Activated CD8-positive, alpha-beta memory T cell treated with anti-CD3 and anti-CD28 coated beads, Interleukin-2, amount 10 ng/mL, durations not matched to agents 7 days and 5 days (primary cell): ENCODE measurements at regions of chr15 and their contacts with region 1.

Region 1: GRCh38 chr15:44711356-44712107 is at the start of gene B2M:
- DNase-seq: peak; percentile 96
- ATAC-seq: peak; percentile 76
- H3K4me3 Mint-ChIP-seq: peak within 1 kb of the TSS; percentile 95
- H3K27ac Mint-ChIP-seq: peak within 1 kb of the TSS; percentile 100
- H3K4me1 Mint-ChIP-seq: peaks cover 42% of the 10 kb centered on the region
- H3K27me3 Mint-ChIP-seq: no peaks in the 10 kb centered on the region
- total RNA-seq, gene B2M: 6,920 to 7,161 TPM

Region 2: GRCh38 chr15:44620081-44620480 is 91.5 kb before region 1 on chr15:
- CTCF ChIA-PET with region 1: no interaction called
- DNase-seq: no peak
- ATAC-seq: no peak
- H3K4me3 Mint-ChIP-seq: no peak overlapping the region
- H3K27ac Mint-ChIP-seq: no peak overlapping the region
- H3K4me1 Mint-ChIP-seq: peaks cover 5% of the 10 kb centered on the region
- H3K27me3 Mint-ChIP-seq: no peaks in the 10 kb centered on the region

Region 3: GRCh38 chr15:44676676-44677075 is 34.9 kb before region 1 on chr15:
- CTCF ChIA-PET with region 1: interaction called, 24 read pairs
- DNase-seq: peak; percentile 77
- ATAC-seq: peak; percentile 54
- H3K4me3 Mint-ChIP-seq: peak overlapping the region; percentile 60
- H3K27ac Mint-ChIP-seq: peak overlapping the region; percentile 92
- H3K4me1 Mint-ChIP-seq: peaks cover 76% of the 10 kb centered on the region
- H3K27me3 Mint-ChIP-seq: no peaks in the 10 kb centered on the region

Region 4: DNA sequence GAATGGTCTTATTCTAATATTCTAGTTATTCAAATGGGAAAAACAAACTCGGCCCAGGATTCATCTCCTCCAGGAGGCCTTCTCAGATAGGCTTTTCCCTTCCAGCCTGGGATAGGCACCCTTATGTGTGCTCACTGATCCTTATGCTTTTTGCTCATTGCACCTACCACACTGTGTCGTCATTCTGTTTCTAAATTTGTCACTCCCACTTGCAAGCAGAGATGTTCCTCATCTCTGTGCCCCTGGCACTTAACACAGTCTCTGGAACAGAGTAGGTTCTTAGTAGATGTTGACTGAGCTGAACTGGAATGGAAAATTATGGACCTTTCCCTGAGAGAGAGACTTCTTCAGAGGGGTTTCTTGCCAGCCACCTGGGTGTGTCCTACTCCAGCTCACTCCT is 29.3 kb before region 1 on chr15:
- CTCF ChIA-PET with region 1: interaction called, 24 read pairs
- DNase-seq: no peak
- ATAC-seq: no peak
- H3K4me3 Mint-ChIP-seq: peak overlapping the region; percentile 60
- H3K27ac Mint-ChIP-seq: peak overlapping the region; percentile 87
- H3K4me1 Mint-ChIP-seq: peaks cover 83% of the 10 kb centered on the region
- H3K27me3 Mint-ChIP-seq: no peaks in the 10 kb centered on the region

Region 5: DNA sequence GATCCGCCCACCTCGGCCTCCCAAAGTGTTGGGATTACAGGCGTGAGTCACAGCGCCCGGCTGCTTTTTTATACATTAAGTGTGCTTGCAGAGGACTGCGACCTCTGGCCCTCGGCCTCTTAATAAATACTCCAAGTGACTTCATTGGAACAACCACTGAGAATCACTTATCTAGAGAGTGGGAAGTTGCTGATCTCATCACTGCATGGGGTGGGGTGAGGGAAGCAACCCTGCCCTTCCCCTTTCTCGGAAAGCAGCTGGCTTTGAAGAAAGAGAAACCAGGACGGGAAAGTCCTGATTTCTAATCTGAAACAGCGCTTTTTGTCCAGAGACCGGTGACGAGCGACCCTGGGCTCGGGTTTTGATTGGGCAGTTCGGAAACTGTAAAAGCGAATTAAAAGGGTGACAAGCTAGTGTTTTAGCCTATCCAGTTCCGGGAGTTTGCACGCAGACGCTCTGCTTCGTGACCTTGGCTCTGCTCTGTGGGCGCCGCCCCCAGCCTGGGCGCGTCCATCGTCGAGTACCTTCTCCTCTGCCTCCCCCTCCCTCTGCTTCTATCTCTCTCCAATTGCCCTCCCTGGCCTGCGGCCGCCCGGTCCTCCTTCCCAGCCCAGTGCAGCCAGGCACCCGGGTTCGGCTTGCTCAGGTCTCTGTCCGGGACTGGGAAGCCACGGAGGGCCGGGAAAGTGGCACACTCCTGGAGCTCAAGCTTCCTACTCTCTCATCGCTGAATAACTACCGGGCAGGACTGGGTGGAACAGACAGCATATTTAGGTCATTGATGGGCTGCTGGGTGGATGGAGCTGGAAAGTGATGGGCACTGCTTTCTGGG is 17.3 kb after region 1 on chr15:
- CTCF ChIA-PET with region 1: interaction called, 138 read pairs
- DNase-seq: peak; percentile 98
- ATAC-seq: peak; percentile 80
- H3K4me3 Mint-ChIP-seq: peak overlapping the region; percentile 94
- H3K27ac Mint-ChIP-seq: peak overlapping the region; percentile 99
- H3K4me1 Mint-ChIP-seq: peaks cover 67% of the 10 kb centered on the region
- H3K27me3 Mint-ChIP-seq: no peaks in the 10 kb centered on the region

Region 6: GRCh38 chr15:44812029-44812517 is 100.5 kb after region 1 on chr15:
- CTCF ChIA-PET with region 1: no interaction called
- DNase-seq: no peak
- ATAC-seq: no peak
- H3K4me3 Mint-ChIP-seq: no peak overlapping the region
- H3K27ac Mint-ChIP-seq: no peak overlapping the region
- H3K4me1 Mint-ChIP-seq: peaks cover 4% of the 10 kb centered on the region
- H3K27me3 Mint-ChIP-seq: peaks cover 17% of the 10 kb centered on the region